ENCODE measurements at regions of chr15 and their contacts with region 1.

Region 1: GRCh38 chr15:29131840-29132420 is 137.7 kb downstream of the NSMCE3 start:
- DNase-seq: no peak
- ATAC-seq: no peak
- H3K4me3 Mint-ChIP-seq: no peak overlapping the region
- H3K27ac Mint-ChIP-seq: no peak overlapping the region; the same call in 1 of the 2 replicates
- H3K4me1 Mint-ChIP-seq: peaks cover 21% of the 10 kb centered on the region
- H3K27me3 Mint-ChIP-seq: no peaks in the 10 kb centered on the region; the same call in 1 of the 2 replicates
- CTCF ChIP-seq: no peak

Region 2: DNA sequence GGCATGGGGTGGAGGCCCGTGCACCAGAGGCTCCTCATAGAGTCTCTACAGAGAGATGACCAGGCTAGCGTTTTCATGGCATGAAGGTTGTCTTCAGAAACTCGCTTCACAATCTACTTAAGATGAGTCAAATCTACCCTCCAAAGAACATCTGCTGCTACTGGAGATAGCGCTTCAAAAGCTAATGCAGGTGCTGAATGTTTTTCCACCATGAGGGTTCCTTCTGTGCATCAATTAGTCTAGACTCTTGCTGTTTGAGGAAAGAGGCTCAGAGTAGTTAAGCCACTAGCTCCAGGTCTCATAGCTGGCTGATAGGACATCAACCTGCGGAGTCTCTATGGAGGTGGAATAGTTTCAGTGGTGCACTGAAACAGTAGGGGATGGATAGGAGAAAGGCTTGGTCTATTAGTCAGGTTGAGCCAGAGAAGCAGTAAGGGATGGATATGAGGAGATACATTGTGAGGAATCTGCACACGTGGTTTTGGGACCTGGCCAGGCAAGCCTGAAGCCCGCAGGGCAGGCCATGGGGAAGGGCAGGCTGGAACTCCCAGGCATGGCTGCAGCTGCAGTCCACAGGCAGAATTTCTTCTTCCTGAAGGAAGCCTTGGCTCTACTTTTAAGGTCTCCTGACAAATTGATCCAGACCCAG is 128.6 kb before region 1 on chr15:
- CTCF ChIA-PET with region 1: no interaction called
- POLR2A ChIA-PET with region 1: no interaction called
- DNase-seq: no peak
- ATAC-seq: no peak
- H3K4me3 Mint-ChIP-seq: no peak overlapping the region
- H3K27ac Mint-ChIP-seq: no peak overlapping the region
- H3K4me1 Mint-ChIP-seq: no peaks in the 10 kb centered on the region
- H3K27me3 Mint-ChIP-seq: no peaks in the 10 kb centered on the region
- CTCF ChIP-seq: no peak

Region 3: GRCh38 chr15:29115093-29115991 is 16.6 kb before region 1 on chr15:
- CTCF ChIA-PET with region 1: interaction called, 18 read pairs
- POLR2A ChIA-PET with region 1: no interaction called
- DNase-seq: peak; percentile 69
- ATAC-seq: peak; percentile 73
- H3K4me3 Mint-ChIP-seq: peak overlapping the region; percentile 59
- H3K27ac Mint-ChIP-seq: no peak overlapping the region
- H3K4me1 Mint-ChIP-seq: peaks cover 10% of the 10 kb centered on the region
- H3K27me3 Mint-ChIP-seq: no peaks in the 10 kb centered on the region
- CTCF ChIP-seq: peak; percentile 44; the same call in 1 of the 2 replicates